PC-9 (cell line): ENCODE measurements at regions of chr1 and their contacts with region 1.

Region 1: DNA sequence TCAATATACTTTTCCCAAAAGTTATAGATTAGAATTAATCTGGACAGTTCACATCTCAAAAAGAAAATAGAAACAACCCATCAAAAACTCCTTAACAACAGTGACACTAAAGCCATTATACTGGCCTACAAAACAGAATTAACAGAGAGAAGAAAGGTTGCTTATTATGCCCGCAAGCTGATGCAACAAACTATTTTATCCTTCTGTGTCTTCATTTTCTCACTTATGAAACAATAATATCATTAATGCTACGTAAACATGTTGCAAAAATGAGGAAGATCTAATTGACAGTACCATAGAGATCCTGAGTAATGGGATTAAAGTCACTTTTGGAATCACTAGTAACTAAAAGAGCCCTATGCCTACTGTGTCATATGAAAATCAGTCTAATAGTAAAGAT is 32.6 kb downstream of the LPGAT1 start:
- DNase-seq: no peak
- H3K4me3 ChIP-seq: no peak overlapping the region
- H3K27ac ChIP-seq: no peak overlapping the region
- H3K4me1 ChIP-seq: no peaks in the 10 kb centered on the region
- H3K27me3 ChIP-seq: no peaks in the 10 kb centered on the region
- CTCF ChIP-seq: no peak

Region 2: DNA sequence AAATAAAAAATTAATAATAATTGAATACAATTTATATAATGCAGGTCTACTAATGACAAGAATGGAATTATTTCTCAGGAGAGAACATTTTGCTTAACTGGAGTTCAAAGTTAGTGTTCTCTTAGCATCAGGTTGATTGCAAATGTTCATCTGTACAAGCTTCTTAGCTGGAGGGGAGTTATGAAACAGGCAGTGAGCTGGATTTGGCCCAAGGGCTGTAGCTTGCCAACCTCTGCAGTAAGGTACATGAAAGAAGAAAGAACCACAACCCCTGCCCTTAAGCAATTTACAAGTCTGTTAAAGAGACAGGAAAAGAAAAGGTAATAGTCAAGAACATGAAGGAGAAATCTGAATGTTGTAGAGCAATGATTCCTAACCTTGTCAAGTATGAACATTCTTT is 15.6 kb after region 1 on chr1:
- CTCF ChIA-PET with region 1: no interaction called
- POLR2A ChIA-PET with region 1: no interaction called
- intact Hi-C with region 1: loop called (anchors 2 kb)
- DNase-seq: peak in 1 of 2 experiments; percentile 7
- H3K4me3 ChIP-seq: no peak overlapping the region
- H3K27ac ChIP-seq: no peak overlapping the region
- H3K4me1 ChIP-seq: no peaks in the 10 kb centered on the region
- H3K27me3 ChIP-seq: no peaks in the 10 kb centered on the region
- CTCF ChIP-seq: no peak

Region 3: DNA sequence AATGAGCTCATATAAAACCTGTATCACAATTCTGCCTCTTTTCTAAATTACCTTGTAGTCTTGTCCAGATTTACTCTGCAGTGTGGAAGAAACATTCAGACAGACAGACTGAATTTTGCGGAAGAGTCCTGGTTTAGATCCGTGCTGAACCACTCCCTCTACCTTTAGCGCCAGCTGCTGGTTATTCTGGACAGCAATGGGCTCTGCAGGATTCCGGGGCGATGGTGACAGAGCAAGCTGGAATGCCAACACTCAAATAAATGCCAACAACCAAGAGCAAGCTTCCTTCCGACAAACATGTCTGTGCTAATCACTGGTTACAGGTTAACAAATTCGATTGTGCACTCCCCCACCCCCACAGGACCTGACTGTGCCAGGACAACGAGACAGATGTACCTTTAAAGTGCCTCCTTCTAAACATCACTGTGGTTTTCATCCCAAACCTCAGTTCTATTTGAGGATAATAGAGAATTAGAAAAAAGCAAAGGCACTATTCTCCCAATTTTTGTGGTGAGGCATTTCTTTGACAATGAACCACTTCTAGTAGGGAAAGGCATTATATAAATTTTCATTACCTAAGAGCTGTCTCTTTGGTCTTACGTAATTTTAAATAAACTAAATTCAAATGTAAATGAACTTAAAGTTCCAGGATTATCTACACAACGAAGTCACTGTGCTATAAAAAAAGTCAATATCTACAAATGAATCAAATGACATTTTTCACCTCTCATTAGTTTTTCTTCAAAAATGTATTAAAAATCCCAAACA is 146.9 kb after region 1 on chr1:
- CTCF ChIA-PET with region 1: no interaction called
- POLR2A ChIA-PET with region 1: no interaction called
- intact Hi-C with region 1: no loop called
- DNase-seq: peak in 1 of 2 experiments; percentile 48
- H3K4me3 ChIP-seq: no peak overlapping the region
- H3K27ac ChIP-seq: no peak overlapping the region
- H3K4me1 ChIP-seq: no peaks in the 10 kb centered on the region
- H3K27me3 ChIP-seq: no peaks in the 10 kb centered on the region
- CTCF ChIP-seq: no peak